CD4-positive, alpha-beta memory T cell (primary cell): ENCODE measurements at regions of chr3 and their contacts with region 1.

Region 1: GRCh38 chr3:13479581-13480339 is at the start of gene HDAC11:
- DNase-seq: peak; percentile 96 to 97 (median 96)
- H3K4me3 ChIP-seq: peak within 1 kb of the TSS; percentile 52 to 92
- H3K4me3 Mint-ChIP-seq: peak within 1 kb of the TSS; percentile 91 to 95 (median 94)
- H3K27ac ChIP-seq: peak within 1 kb of the TSS; percentile 90
- H3K27ac Mint-ChIP-seq: peak within 1 kb of the TSS; percentile 94 to 96 (median 96)
- H3K4me1 ChIP-seq: peaks cover 28% of the 10 kb centered on the region
- H3K4me1 Mint-ChIP-seq: peaks cover 6 to 35% (median 20%) of the 10 kb centered on the region in 4 donors
- H3K27me3 ChIP-seq: no peaks in the 10 kb centered on the region
- H3K27me3 Mint-ChIP-seq: peaks cover 0 to under 1% of the 10 kb centered on the region in 2 donors
- total RNA-seq, gene HDAC11: 7.1 to 7.6 TPM

Region 2: GRCh38 chr3:12967606-12968351 is 512.0 kb before region 1 on chr3:
- CTCF ChIA-PET with region 1: no interaction called
- POLR2A ChIA-PET with region 1: no interaction called
- intact Hi-C with region 1: loop called (anchors 1 kb)
- DNase-seq: peak; percentile 82 to 89 (median 83)
- H3K4me3 ChIP-seq: peak overlapping the region in 1 of 2 donors; percentile 50
- H3K4me3 Mint-ChIP-seq: peak overlapping the region; percentile 67 to 86 (median 82)
- H3K27ac ChIP-seq: peak overlapping the region; percentile 8
- H3K27ac Mint-ChIP-seq: peak overlapping the region; percentile 27 to 89 (median 78)
- H3K4me1 ChIP-seq: peaks cover 68% of the 10 kb centered on the region
- H3K4me1 Mint-ChIP-seq: peaks cover 47 to 87% (median 65%) of the 10 kb centered on the region in 4 donors
- H3K27me3 ChIP-seq: no peaks in the 10 kb centered on the region
- H3K27me3 Mint-ChIP-seq: no peaks in the 10 kb centered on the region